Activated CD4-positive, alpha-beta memory T cell treated with anti-CD3 and anti-CD28 coated beads for 36 hours (primary cell): ENCODE measurements at regions of chr5 and their contacts with region 1.

Region 1: GRCh38 chr5:137754126-137754960 is at the start of gene HNRNPA0:
- DNase-seq: peak; percentile 97
- H3K4me3 Mint-ChIP-seq: peak within 1 kb of the TSS; percentile 93
- H3K27ac Mint-ChIP-seq: peak within 1 kb of the TSS; percentile 100
- H3K4me1 Mint-ChIP-seq: peaks cover 32% of the 10 kb centered on the region
- H3K27me3 Mint-ChIP-seq: peaks cover 3% of the 10 kb centered on the region
- total RNA-seq, gene HNRNPA0: 29.2 to 29.6 TPM

Region 2: GRCh38 chr5:137400571-137400970 is 353.8 kb before region 1 on chr5:
- CTCF ChIA-PET with region 1: no interaction called
- POLR2A ChIA-PET with region 1: no interaction called
- intact Hi-C with region 1: no loop called
- DNase-seq: no peak
- H3K4me3 Mint-ChIP-seq: no peak overlapping the region
- H3K27ac Mint-ChIP-seq: no peak overlapping the region
- H3K4me1 Mint-ChIP-seq: no peaks in the 10 kb centered on the region
- H3K27me3 Mint-ChIP-seq: peaks cover 2% of the 10 kb centered on the region

Region 3: GRCh38 chr5:137735555-137736284 is 18.6 kb before region 1 on chr5 and contains the start of gene KLHL3:
- CTCF ChIA-PET with region 1: interaction called, 32 read pairs
- POLR2A ChIA-PET with region 1: interaction called, 9 read pairs
- intact Hi-C with region 1: loop called (anchors 1 kb)
- DNase-seq: peak; percentile 50
- H3K4me3 Mint-ChIP-seq: no peak within 1 kb of the TSS
- H3K27ac Mint-ChIP-seq: no peak within 1 kb of the TSS
- H3K4me1 Mint-ChIP-seq: peaks cover 31% of the 10 kb centered on the region
- H3K27me3 Mint-ChIP-seq: no peaks in the 10 kb centered on the region
- total RNA-seq, gene KLHL3: 3.0 to 3.4 TPM

Region 4: GRCh38 chr5:137808503-137809205 is 54.3 kb after region 1 on chr5:
- CTCF ChIA-PET with region 1: no interaction called
- POLR2A ChIA-PET with region 1: no interaction called
- intact Hi-C with region 1: no loop called
- DNase-seq: no peak
- H3K4me3 Mint-ChIP-seq: no peak overlapping the region
- H3K27ac Mint-ChIP-seq: no peak overlapping the region
- H3K4me1 Mint-ChIP-seq: no peaks in the 10 kb centered on the region
- H3K27me3 Mint-ChIP-seq: no peaks in the 10 kb centered on the region

Region 5: DNA sequence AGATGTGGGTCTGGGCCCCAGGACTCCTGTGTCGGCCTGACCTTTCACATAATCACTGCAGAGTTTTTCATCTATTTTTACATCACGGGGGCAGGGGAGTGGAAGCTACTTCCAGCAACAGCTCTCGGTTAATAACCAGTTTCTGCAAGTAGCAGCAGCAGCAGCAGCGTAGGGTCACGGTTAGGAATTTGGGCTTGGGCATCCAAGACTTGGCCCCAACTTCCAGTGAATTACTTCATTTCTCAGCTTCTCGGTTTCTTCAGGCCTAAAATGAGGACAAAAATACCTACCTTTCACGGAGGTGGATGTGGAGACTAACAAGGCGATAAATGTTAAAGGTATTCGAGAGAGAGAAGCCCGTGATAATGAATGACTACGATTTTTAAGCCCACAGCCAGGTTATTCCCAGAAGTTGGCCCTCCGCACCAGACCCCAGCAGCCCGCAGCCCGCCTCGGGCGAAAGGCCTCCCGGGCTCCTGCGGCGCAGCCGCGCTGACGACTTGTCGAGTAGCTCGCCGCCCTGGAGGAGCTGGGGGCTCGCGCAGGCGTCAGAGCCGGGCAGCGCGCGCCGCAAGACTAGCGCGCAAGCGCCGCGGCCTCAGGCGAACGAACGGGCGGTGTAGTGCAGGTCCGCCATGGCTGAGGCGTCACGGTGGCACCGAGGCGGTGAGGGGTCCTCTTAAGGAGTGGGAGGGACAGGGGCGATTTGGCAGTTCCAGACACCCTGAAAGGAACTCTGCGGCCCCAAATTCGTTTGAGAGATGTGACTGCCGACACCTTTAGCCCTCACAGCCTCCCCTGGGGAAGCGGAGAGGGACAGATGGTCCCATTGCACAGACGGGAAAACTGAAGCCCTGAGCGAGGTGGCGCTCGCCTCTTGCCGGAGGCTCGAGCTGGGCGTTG is 134.8 kb after region 1 on chr5 and contains the start of gene PKD2L2:
- CTCF ChIA-PET with region 1: no interaction called
- POLR2A ChIA-PET with region 1: interaction called, 10 read pairs
- intact Hi-C with region 1: loop called (anchors 2 kb)
- DNase-seq: peak; percentile 89
- H3K4me3 Mint-ChIP-seq: peak within 1 kb of the TSS; percentile 87
- H3K27ac Mint-ChIP-seq: peak within 1 kb of the TSS; percentile 89
- H3K4me1 Mint-ChIP-seq: peaks cover 19% of the 10 kb centered on the region
- H3K27me3 Mint-ChIP-seq: no peaks in the 10 kb centered on the region
- total RNA-seq, gene PKD2L2: not detected

Region 6: GRCh38 chr5:138138949-138139780 is 384.8 kb after region 1 on chr5 and contains the start of gene NME5:
- CTCF ChIA-PET with region 1: no interaction called
- POLR2A ChIA-PET with region 1: no interaction called
- intact Hi-C with region 1: loop called (anchors 10 kb)
- DNase-seq: peak; percentile 11
- H3K4me3 Mint-ChIP-seq: no peak within 1 kb of the TSS
- H3K27ac Mint-ChIP-seq: no peak within 1 kb of the TSS
- H3K4me1 Mint-ChIP-seq: no peaks in the 10 kb centered on the region
- H3K27me3 Mint-ChIP-seq: peaks cover 7% of the 10 kb centered on the region
- total RNA-seq, gene NME5: not detected

Region 7: GRCh38 chr5:138337685-138338410 is 583.5 kb after region 1 on chr5 and contains the start of gene FAM53C:
- CTCF ChIA-PET with region 1: no interaction called
- POLR2A ChIA-PET with region 1: no interaction called
- intact Hi-C with region 1: loop called (anchors 5 kb)
- DNase-seq: peak; percentile 94
- H3K4me3 Mint-ChIP-seq: peak within 1 kb of the TSS; percentile 93
- H3K27ac Mint-ChIP-seq: peak within 1 kb of the TSS; percentile 96
- H3K4me1 Mint-ChIP-seq: peaks cover 38% of the 10 kb centered on the region
- H3K27me3 Mint-ChIP-seq: no peaks in the 10 kb centered on the region
- total RNA-seq, gene FAM53C: 17.2 to 19.2 TPM